WTC11 (cell line): ENCODE measurements at regions of chr2 and their contacts with region 1.

Region 1: GRCh38 chr2:54704688-54705605 is 18.5 kb upstream of the EML6 start:
- DNase-seq: no peak
- ATAC-seq: no peak
- H3K4me3 Mint-ChIP-seq: no peak overlapping the region
- H3K27ac Mint-ChIP-seq: no peak overlapping the region
- H3K4me1 Mint-ChIP-seq: 0 out of 2 replicates have a peak, but pooled peaks cover 6% of the 10 kb centered on the region
- H3K27me3 Mint-ChIP-seq: peaks cover 4% of the 10 kb centered on the region
- CTCF ChIP-seq: no peak

Region 2: GRCh38 chr2:54522624-54523281 is 182.2 kb before region 1 on chr2:
- CTCF ChIA-PET with region 1: interaction called, 10 read pairs
- POLR2A ChIA-PET with region 1: no interaction called
- DNase-seq: peak; percentile 75
- ATAC-seq: peak; percentile 96
- H3K4me3 Mint-ChIP-seq: no peak overlapping the region
- H3K27ac Mint-ChIP-seq: no peak overlapping the region
- H3K4me1 Mint-ChIP-seq: peaks cover 52% of the 10 kb centered on the region
- H3K27me3 Mint-ChIP-seq: no peaks in the 10 kb centered on the region
- CTCF ChIP-seq: peak; percentile 48

Region 3: GRCh38 chr2:54634564-54635511 is 70.1 kb before region 1 on chr2:
- CTCF ChIA-PET with region 1: no interaction called
- POLR2A ChIA-PET with region 1: no interaction called
- DNase-seq: no peak
- ATAC-seq: peak; percentile 44; the same call in 1 of the 2 replicates
- H3K4me3 Mint-ChIP-seq: no peak overlapping the region
- H3K27ac Mint-ChIP-seq: peak overlapping the region; percentile 78
- H3K4me1 Mint-ChIP-seq: peaks cover 8% of the 10 kb centered on the region
- H3K27me3 Mint-ChIP-seq: no peaks in the 10 kb centered on the region
- CTCF ChIP-seq: no peak

Region 4: DNA sequence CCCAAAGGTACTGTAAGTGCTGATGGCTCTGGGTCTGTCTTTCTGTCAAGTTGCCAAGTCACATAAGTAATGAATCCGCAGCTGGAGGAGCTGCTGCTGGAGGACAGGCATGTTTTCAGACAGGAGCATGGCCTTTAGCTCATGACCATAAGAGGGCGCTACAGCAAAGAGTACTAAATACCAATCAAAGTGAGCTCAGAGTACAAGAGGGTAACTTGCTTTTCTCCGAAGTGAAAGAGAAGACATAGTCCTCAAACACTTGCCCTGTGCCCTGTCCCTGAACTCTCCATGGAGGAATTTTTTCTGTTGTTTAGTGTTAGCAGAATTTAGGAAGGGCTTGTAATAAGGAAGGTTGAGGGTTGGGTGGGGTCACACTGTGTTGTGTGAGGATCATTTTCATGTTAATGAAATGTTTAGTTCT is 39.5 kb before region 1 on chr2:
- CTCF ChIA-PET with region 1: interaction called, 171 read pairs
- POLR2A ChIA-PET with region 1: interaction called, 5 read pairs
- DNase-seq: peak; percentile 65
- ATAC-seq: peak; percentile 94
- H3K4me3 Mint-ChIP-seq: no peak overlapping the region
- H3K27ac Mint-ChIP-seq: peak overlapping the region; percentile 76
- H3K4me1 Mint-ChIP-seq: peaks cover 9% of the 10 kb centered on the region
- H3K27me3 Mint-ChIP-seq: no peaks in the 10 kb centered on the region
- CTCF ChIP-seq: peak; percentile 74

Region 5: GRCh38 chr2:54673501-54673998 is 31.4 kb before region 1 on chr2:
- CTCF ChIA-PET with region 1: interaction called, 19 read pairs
- POLR2A ChIA-PET with region 1: no interaction called
- DNase-seq: no peak
- ATAC-seq: peak; percentile 25; the same call in 1 of the 2 replicates
- H3K4me3 Mint-ChIP-seq: no peak overlapping the region
- H3K27ac Mint-ChIP-seq: no peak overlapping the region; the same call in 1 of the 2 replicates
- H3K4me1 Mint-ChIP-seq: peaks cover 17% of the 10 kb centered on the region
- H3K27me3 Mint-ChIP-seq: no peaks in the 10 kb centered on the region
- CTCF ChIP-seq: no peak

Region 6: GRCh38 chr2:54723131-54723995 is 18.4 kb after region 1 on chr2 and contains the start of gene EML6:
- CTCF ChIA-PET with region 1: interaction called, 13 read pairs
- POLR2A ChIA-PET with region 1: interaction called, 4 read pairs
- DNase-seq: peak; percentile 99
- ATAC-seq: peak; percentile 98
- H3K4me3 Mint-ChIP-seq: peak within 1 kb of the TSS; percentile 84
- H3K27ac Mint-ChIP-seq: peak within 1 kb of the TSS; percentile 61; the same call in 1 of the 2 replicates
- H3K4me1 Mint-ChIP-seq: peaks cover 7% of the 10 kb centered on the region
- H3K27me3 Mint-ChIP-seq: peaks cover 60% of the 10 kb centered on the region
- CTCF ChIP-seq: no peak
- total RNA-seq, gene EML6: 1.9 to 2.5 TPM (median 2.1 TPM) in 3 replicates

Region 7: DNA sequence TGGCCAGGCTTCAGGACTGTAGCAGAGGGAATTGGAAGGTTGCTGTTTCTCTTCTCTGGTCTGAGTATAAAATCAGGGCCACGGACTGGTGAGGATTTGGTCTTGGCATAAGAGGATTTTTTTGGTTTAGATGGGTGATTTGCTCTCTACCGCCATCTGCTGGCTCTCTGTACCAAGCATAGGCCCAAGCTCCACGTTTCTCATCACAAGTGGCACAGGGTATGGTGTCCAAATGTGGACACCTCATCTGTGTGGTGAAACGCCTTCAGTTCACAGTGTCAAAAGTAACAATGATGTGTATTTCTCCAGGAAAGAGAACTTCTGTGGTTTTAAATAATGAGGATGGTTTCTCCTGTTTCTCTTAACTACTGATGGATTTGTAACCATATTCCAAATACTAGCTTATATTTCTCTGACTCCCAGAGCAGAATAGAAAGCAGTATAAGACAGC is 133.7 kb after region 1 on chr2:
- CTCF ChIA-PET with region 1: interaction called, 12 read pairs
- POLR2A ChIA-PET with region 1: no interaction called
- DNase-seq: peak; percentile 62
- ATAC-seq: peak; percentile 87
- H3K4me3 Mint-ChIP-seq: no peak overlapping the region
- H3K27ac Mint-ChIP-seq: no peak overlapping the region
- H3K4me1 Mint-ChIP-seq: no peaks in the 10 kb centered on the region
- H3K27me3 Mint-ChIP-seq: no peaks in the 10 kb centered on the region
- CTCF ChIP-seq: peak; percentile 76

Region 8: GRCh38 chr2:55168221-55169154 is 463.5 kb after region 1 on chr2:
- CTCF ChIA-PET with region 1: no interaction called
- POLR2A ChIA-PET with region 1: no interaction called
- DNase-seq: no peak
- ATAC-seq: 0 out of 2 replicates have a peak, but pooled peaks have one; percentile 38
- H3K4me3 Mint-ChIP-seq: no peak overlapping the region
- H3K27ac Mint-ChIP-seq: no peak overlapping the region; the same call in 1 of the 2 replicates
- H3K4me1 Mint-ChIP-seq: peaks cover 26% of the 10 kb centered on the region
- H3K27me3 Mint-ChIP-seq: no peaks in the 10 kb centered on the region
- CTCF ChIP-seq: peak; percentile 34; the same call in 1 of the 2 replicates